K562 (cell line): ENCODE measurements at regions of chr2 and their contacts with region 1.

Region 1: DNA sequence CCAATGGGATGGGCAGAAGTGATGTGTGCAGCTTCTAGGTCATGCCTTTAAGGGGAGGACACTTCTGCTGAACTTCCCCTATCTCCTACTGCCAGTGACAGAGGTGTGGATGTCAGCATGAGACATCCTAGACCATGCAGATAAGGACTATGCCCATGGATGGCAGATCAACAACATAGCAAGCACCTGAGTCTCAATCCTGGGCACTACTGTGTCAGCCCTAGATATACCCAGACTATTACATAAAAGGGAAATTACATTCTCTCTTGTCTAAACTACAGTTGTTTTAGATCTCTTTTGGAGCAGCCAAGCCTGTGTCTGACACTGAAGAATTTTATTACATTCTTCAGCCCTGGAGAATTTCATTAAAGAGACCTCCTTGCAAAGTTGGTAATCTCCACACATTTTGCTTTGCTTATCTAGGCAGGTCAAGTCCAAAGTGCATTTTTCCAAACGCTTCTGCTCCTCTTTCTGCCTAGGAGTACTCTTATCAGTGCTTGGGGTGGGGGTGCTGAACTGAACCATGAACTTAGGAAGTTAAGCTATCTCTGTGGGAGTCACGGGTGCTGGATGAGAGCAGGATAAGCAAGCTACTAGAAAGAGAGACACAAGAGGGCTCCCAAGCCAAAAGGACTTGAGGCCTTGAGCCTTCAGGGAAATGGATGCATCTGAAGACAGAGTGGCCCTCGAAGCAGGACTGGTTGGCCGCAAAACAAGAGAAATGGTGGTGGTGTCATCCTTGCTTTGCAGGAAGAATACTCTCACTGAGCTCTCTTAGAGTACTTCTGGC is 95.2 kb upstream of the SPRED2 start:
- DNase-seq: peak; percentile 73 to 87 (median 77)
- ATAC-seq: peak; percentile 91
- H3K4me3 ChIP-seq: no peak overlapping the region
- H3K27ac ChIP-seq: peak overlapping the region; percentile 63
- H3K4me1 ChIP-seq: peaks cover 15 to 25% of the 10 kb centered on the region in 2 experiments
- H3K27me3 ChIP-seq: no peaks in the 10 kb centered on the region
- CTCF ChIP-seq: peak in 2 of 3 experiments; percentile 26 to 57; a peak in 3 of 6 replicates
- EP300 ChIP-seq: peak; percentile 71
- POLR2A ChIP-seq: no peak
- RAD21 ChIP-seq: peak; percentile 74 to 76

Region 2: DNA sequence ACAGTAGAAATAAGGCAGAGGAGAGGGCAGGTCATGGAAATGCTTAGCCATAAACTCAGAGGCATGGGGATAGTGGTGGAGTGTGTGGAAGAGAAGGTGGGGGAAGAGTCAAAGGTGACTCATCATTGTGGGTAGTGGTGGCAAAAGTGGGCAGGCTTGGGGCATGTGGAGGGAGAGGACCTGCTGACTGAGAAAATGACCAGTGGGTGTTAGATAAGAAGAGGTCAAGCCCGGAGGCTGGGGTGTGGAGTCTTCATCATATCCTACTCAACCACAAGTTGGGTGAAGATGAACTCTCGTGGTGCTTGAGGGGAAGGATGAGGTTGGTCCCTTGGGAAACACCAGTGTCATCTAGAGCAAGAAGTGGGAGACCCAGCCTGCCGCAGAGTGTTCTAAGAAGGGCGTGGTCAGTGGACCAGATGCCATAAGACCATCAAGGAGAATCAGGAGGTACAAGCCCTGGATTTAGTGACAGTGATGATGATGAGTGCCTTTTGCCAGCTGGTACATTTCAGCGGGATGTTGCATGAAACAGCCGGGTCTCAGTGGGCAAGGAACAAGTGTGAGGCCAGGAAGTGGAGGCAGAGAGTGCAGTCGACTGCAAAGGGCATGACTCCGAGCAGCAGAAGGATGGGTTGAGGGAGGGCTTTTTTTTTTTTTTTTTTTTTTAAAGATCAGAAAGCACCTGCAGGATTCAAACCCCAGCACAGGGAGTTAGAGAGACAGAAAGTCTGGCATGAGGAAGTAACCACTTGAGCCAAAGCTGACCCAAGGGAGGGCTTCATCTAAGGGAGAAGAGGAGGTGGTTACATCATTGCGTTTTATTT is 27.3 kb after region 1 on chr2:
- CTCF ChIA-PET with region 1: no interaction called
- POLR2A ChIA-PET with region 1: interaction called, 3 read pairs
- in situ Hi-C with region 1: no loop called
- intact Hi-C with region 1: loop called (anchors 1 kb)
- DNase-seq: peak in 3 of 4 experiments; percentile 23 to 50 (median 30)
- ATAC-seq: no peak
- H3K4me3 ChIP-seq: no peak overlapping the region
- H3K27ac ChIP-seq: no peak overlapping the region
- H3K4me1 ChIP-seq: peaks cover 11 to 14% of the 10 kb centered on the region in 2 experiments; a peak in 4 of 5 replicates
- H3K27me3 ChIP-seq: no peaks in the 10 kb centered on the region
- CTCF ChIP-seq: no peak
- EP300 ChIP-seq: no peak
- POLR2A ChIP-seq: no peak
- RAD21 ChIP-seq: no peak

Region 3: DNA sequence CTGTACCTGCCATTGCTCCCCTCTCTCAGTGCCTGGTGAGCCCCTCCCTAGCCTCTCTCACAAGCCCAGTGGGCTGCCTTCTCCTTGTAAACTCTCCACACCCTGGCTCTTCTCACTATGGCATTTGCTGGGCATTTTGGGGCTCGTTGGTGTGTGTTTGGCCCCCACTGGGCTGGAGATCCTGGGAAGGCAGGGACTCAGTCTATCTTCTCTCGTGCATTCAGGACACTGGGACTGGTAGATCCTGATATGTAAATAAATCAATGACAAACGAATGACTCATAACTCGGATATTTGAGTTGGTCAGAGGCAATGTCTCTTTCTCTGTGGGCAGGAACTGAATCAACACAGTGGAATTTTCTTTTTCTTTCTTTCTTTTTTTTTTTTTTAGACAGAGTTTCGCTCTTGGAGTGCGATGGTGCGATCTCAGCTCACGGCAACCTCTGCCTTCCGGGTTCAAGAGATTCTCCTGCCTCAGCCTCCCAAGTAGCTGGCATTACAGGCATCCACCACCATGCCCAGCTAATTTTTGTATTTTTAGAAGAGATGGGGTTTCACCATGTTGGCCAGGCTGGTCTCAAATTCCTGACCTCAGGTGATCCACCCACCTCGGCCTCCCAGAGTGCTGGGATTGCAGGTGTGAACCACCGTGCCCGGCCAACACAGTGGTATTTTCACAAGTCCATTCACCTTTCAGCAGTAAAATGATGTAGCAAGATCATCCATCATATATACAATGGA is 49.4 kb after region 1 on chr2:
- CTCF ChIA-PET with region 1: no interaction called
- POLR2A ChIA-PET with region 1: interaction called, 3 read pairs
- in situ Hi-C with region 1: no loop called
- intact Hi-C with region 1: loop called (anchors 1 kb)
- DNase-seq: peak in 1 of 4 experiments; percentile 52
- ATAC-seq: peak; percentile 53; the same call in 2 of the 3 replicates
- H3K4me3 ChIP-seq: no peak overlapping the region
- H3K27ac ChIP-seq: no peak overlapping the region
- H3K4me1 ChIP-seq: peaks cover 2 to 4% of the 10 kb centered on the region in 2 experiments; a peak in 3 of 5 replicates
- H3K27me3 ChIP-seq: peaks cover 3 to 12% of the 10 kb centered on the region in 2 experiments; a peak in 4 of 5 replicates
- CTCF ChIP-seq: no peak
- EP300 ChIP-seq: no peak
- POLR2A ChIP-seq: no peak
- RAD21 ChIP-seq: no peak

Region 4: GRCh38 chr2:65686927-65687521 is 159.4 kb after region 1 on chr2:
- CTCF ChIA-PET with region 1: no interaction called
- POLR2A ChIA-PET with region 1: no interaction called
- in situ Hi-C with region 1: no loop called
- intact Hi-C with region 1: no loop called
- DNase-seq: peak in 1 of 4 experiments; percentile 12
- ATAC-seq: 0 out of 3 replicates have a peak, but pooled peaks have one; percentile 40
- H3K4me3 ChIP-seq: no peak overlapping the region
- H3K27ac ChIP-seq: no peak overlapping the region
- H3K4me1 ChIP-seq: no peaks in the 10 kb centered on the region
- H3K27me3 ChIP-seq: peaks cover 13 to 24% of the 10 kb centered on the region in 2 experiments; a peak in 4 of 5 replicates
- CTCF ChIP-seq: peak in 2 of 3 experiments; percentile 26 to 39; a peak in 3 of 6 replicates
- EP300 ChIP-seq: no peak
- POLR2A ChIP-seq: no peak
- RAD21 ChIP-seq: peak in 1 of 2 experiments; percentile 57; a peak in 3 of 4 replicates